ENCODE measurements at regions of chr14 and their contacts with region 1.

Region 1: DNA sequence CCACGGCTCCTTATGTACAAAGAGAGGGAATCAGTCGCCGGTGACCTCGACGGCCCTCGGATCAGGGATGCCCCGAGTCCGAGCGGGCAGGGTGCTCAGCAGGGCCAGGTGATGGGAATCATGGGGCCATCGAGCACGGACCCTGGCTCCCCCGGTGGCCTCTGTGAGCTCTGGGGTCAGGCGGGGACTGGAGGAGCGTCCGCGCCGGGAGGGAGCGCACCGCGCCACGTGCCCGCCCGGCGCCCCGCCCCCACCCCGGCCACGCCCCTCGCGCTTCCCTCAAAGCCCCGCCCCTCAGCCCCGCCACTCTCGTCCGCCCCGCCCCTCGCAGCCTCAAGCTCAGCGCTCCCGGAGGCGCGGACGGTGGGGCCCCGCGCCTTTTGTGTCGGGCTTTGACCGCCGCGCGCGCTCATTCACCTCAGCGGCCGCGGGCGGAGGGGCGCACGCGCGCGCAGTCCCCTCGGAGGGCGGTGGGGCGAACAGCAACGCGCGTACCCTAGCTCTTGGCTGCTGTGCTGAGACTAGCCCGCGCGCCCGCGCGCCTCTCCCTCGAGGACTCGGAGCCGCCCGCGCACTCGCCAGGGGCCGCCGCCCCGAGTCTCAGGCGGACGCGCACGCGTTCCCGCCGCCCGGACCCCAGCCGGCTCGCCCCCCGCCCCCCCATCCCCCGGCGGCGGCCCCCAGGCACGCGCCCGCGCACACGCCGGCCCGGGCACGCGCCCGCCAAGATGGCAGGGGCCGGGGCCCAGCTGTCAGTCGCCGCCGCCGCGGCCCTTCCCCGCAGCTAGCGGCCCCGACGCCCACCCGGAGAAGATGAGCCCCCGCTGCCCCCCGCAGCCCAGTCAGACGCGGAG is 93.9 kb upstream of the EVL start:
- DNase-seq: peak; percentile 41 to 45
- H3K4me3 ChIP-seq: peak overlapping the region; percentile 60
- H3K27ac ChIP-seq: no peak overlapping the region
- H3K4me1 ChIP-seq: no peaks in the 10 kb centered on the region
- H3K27me3 ChIP-seq: no peaks in the 10 kb centered on the region
- CTCF ChIP-seq: no peak

Region 2: DNA sequence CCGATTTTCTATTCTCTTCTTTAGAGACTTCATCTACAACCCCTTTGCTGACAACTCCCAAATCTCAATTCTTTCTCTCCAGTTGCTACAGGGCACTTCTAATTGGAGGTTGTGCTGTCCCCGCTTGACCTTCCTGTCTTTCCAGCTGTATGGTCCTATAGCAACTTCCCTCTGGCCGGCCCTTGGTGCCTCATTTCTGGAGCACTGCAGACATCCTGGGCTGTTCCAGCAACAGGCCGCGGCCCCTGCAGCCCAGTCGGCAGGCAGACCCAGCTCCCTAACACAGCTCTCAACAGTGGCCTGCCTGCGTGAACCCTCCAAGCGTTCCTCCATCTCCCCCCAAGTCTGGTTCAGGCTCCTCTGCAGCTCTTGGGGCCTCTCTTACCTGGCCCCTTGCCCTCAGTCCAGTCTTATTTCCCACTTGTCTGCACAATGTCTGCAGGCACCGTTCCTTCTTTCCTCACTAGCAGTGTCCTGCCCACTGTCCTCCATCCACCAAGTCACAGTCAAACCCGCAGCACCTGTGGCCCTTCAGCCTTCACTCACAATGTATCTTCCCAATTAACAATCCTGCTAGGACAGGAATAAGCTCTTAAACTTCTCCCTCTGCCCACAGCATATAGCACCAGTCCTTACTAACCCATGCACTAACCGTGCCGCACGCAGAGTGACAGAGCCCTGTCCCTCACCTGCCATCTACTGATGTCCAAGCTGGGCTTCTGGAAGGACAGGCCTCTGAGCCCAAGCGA is 179.7 kb before region 1 on chr14:
- CTCF ChIA-PET with region 1: no interaction called
- POLR2A ChIA-PET with region 1: no interaction called
- intact Hi-C with region 1: no loop called
- DNase-seq: no peak
- H3K4me3 ChIP-seq: no peak overlapping the region
- H3K27ac ChIP-seq: no peak overlapping the region
- H3K4me1 ChIP-seq: peaks cover 8% of the 10 kb centered on the region; the same call in 1 of the 2 replicates
- H3K27me3 ChIP-seq: no peaks in the 10 kb centered on the region
- CTCF ChIP-seq: no peak

Region 3: DNA sequence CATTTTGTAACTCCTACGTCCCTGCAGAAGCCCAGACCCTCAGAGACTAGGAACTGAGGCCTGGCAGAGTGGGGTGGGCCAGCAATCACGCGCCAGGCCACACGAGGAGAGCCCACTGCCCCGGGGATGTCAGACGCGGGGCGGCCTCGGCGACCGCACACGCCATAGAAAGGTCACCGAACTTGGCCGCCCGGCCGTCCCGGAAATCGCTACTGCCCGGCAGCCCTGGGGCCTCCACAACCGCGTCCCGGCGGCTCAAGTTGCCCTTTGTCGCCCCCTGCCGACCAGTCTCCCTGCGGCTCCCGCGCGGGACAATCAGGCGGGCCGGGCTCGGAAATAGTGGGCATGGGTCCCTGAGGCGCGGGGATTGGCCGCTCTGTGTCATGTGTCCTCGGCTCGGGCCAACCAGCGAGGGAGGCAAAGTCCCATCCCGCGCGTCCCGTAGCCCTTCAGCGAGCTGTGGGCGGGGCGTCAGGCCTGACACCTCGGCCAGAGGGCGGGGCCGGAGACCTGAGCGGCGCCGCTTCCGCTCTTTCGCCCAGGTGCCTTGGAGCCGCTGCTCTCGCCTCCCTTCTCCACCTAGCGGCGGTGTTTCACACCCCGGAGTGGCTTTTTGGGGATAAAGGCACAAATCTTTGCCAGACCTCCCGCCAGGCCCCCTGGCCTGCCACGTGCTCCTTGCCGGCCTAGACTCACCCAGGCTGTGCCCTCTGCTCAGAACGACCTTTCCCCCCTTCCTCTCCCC is 221.5 kb after region 1 on chr14:
- CTCF ChIA-PET with region 1: no interaction called
- POLR2A ChIA-PET with region 1: interaction called, 17 read pairs
- intact Hi-C with region 1: no loop called
- DNase-seq: peak; percentile 91
- H3K4me3 ChIP-seq: peak overlapping the region; percentile 46; the same call in 1 of the 2 replicates
- H3K27ac ChIP-seq: peak overlapping the region; percentile 51; the same call in 1 of the 2 replicates
- H3K4me1 ChIP-seq: peaks cover 13% of the 10 kb centered on the region; the same call in 1 of the 2 replicates
- H3K27me3 ChIP-seq: no peaks in the 10 kb centered on the region
- CTCF ChIP-seq: peak; percentile 71

Measured in PC-9 (cell line).